ENCODE measurements at regions of chr22 and their contacts with region 1.

Region 1: GRCh38 chr22:50469377-50470305 is 5.2 kb downstream of the SBF1 start:
- DNase-seq: peak; percentile 99
- ATAC-seq: peak; percentile 86
- H3K4me3 Mint-ChIP-seq: peak overlapping the region; percentile 70
- H3K27ac Mint-ChIP-seq: peak overlapping the region; percentile 95
- H3K4me1 Mint-ChIP-seq: peaks cover 75% of the 10 kb centered on the region
- H3K27me3 Mint-ChIP-seq: no peaks in the 10 kb centered on the region
- CTCF ChIP-seq: peak; percentile 39

Region 2: GRCh38 chr22:50498322-50498890 is 28.8 kb after region 1 on chr22:
- CTCF ChIA-PET with region 1: interaction called, 19 read pairs
- POLR2A ChIA-PET with region 1: interaction called, 5 read pairs
- intact Hi-C with region 1: no loop called
- DNase-seq: peak; percentile 80
- ATAC-seq: peak; percentile 95
- H3K4me3 Mint-ChIP-seq: no peak overlapping the region
- H3K27ac Mint-ChIP-seq: no peak overlapping the region
- H3K4me1 Mint-ChIP-seq: no peaks in the 10 kb centered on the region
- H3K27me3 Mint-ChIP-seq: no peaks in the 10 kb centered on the region
- CTCF ChIP-seq: peak; percentile 79